ENCODE measurements at regions of chr15 and their contacts with region 1.

Region 1: GRCh38 chr15:32706704-32707103 is 11.1 kb upstream of the GREM1 start:
- DNase-seq: no peak
- H3K4me3 ChIP-seq: no peak overlapping the region
- H3K4me3 Mint-ChIP-seq: no peak overlapping the region
- H3K27ac ChIP-seq: no peak overlapping the region
- H3K27ac Mint-ChIP-seq: peak overlapping the region in 2 of 7 donors; percentile 73 to 82
- H3K4me1 ChIP-seq: peaks cover 7 to 36% of the 10 kb centered on the region in 2 donors
- H3K4me1 Mint-ChIP-seq: peaks cover 30% of the 10 kb centered on the region
- H3K27me3 ChIP-seq: peaks cover 3 to 7% of the 10 kb centered on the region in 2 donors
- H3K27me3 Mint-ChIP-seq: peaks cover 12 to 18% (median 12%) of the 10 kb centered on the region in 3 donors
- CTCF ChIP-seq: no peak

Region 2: GRCh38 chr15:32641517-32642059 is 65.1 kb before region 1 on chr15 and contains the start of gene SCG5:
- intact Hi-C with region 1: loop called in 1 of 2 experiments (anchors 10 kb)
- DNase-seq: no peak
- H3K4me3 ChIP-seq: peak within 1 kb of the TSS in 1 of 3 experiments; percentile 30
- H3K4me3 Mint-ChIP-seq: peak within 1 kb of the TSS; percentile 18 to 68
- H3K27ac ChIP-seq: no peak within 1 kb of the TSS
- H3K27ac Mint-ChIP-seq: no peak within 1 kb of the TSS
- H3K4me1 ChIP-seq: no peaks in the 10 kb centered on the region
- H3K4me1 Mint-ChIP-seq: peaks cover 7% of the 10 kb centered on the region
- H3K27me3 ChIP-seq: peaks cover 0 to 3% of the 10 kb centered on the region in 2 donors
- H3K27me3 Mint-ChIP-seq: peaks cover 7 to 12% (median 10%) of the 10 kb centered on the region in 3 donors
- CTCF ChIP-seq: no peak
- polyA plus RNA-seq, gene SCG5: not detected

Region 3: GRCh38 chr15:32730677-32731654 is 24.3 kb after region 1 on chr15:
- intact Hi-C with region 1: no loop called
- DNase-seq: no peak
- H3K4me3 ChIP-seq: peak overlapping the region in 1 of 3 experiments; percentile 35
- H3K4me3 Mint-ChIP-seq: peak overlapping the region; percentile 5 to 18
- H3K27ac ChIP-seq: no peak overlapping the region
- H3K27ac Mint-ChIP-seq: no peak overlapping the region
- H3K4me1 ChIP-seq: no peaks in the 10 kb centered on the region
- H3K4me1 Mint-ChIP-seq: peaks cover 5% of the 10 kb centered on the region
- H3K27me3 ChIP-seq: peaks cover 3 to 8% of the 10 kb centered on the region in 2 donors
- H3K27me3 Mint-ChIP-seq: peaks cover 19 to 25% (median 19%) of the 10 kb centered on the region in 3 donors
- CTCF ChIP-seq: no peak

Region 4: GRCh38 chr15:32781781-32782180 is 75.1 kb after region 1 on chr15:
- intact Hi-C with region 1: no loop called
- DNase-seq: no peak
- H3K4me3 ChIP-seq: no peak overlapping the region
- H3K4me3 Mint-ChIP-seq: no peak overlapping the region
- H3K27ac ChIP-seq: no peak overlapping the region
- H3K27ac Mint-ChIP-seq: no peak overlapping the region
- H3K4me1 ChIP-seq: no peaks in the 10 kb centered on the region
- H3K4me1 Mint-ChIP-seq: no peaks in the 10 kb centered on the region
- H3K27me3 ChIP-seq: no peaks in the 10 kb centered on the region
- H3K27me3 Mint-ChIP-seq: peaks cover 0 to 4% (median 0%) of the 10 kb centered on the region in 3 donors
- CTCF ChIP-seq: no peak